CD4-positive, alpha-beta memory T cell (primary cell): ENCODE measurements at regions of chr6 and their contacts with region 1.

Region 1: GRCh38 chr6:41936073-41936837 is 5.4 kb downstream of the CCND3 start:
- DNase-seq: peak; percentile 79 to 91 (median 83)
- H3K4me3 ChIP-seq: peak overlapping the region; percentile 55 to 56
- H3K4me3 Mint-ChIP-seq: peak overlapping the region; percentile 71 to 99 (median 88)
- H3K27ac ChIP-seq: peak overlapping the region; percentile 58
- H3K27ac Mint-ChIP-seq: peak overlapping the region; percentile 86 to 96 (median 91)
- H3K4me1 ChIP-seq: peaks cover 72% of the 10 kb centered on the region
- H3K4me1 Mint-ChIP-seq: peaks cover 57 to 78% (median 69%) of the 10 kb centered on the region in 4 donors
- H3K27me3 ChIP-seq: no peaks in the 10 kb centered on the region
- H3K27me3 Mint-ChIP-seq: no peaks in the 10 kb centered on the region

Region 2: GRCh38 chr6:40743226-40743625 is 1193.0 kb before region 1 on chr6:
- CTCF ChIA-PET with region 1: no interaction called
- POLR2A ChIA-PET with region 1: no interaction called
- intact Hi-C with region 1: no loop called
- DNase-seq: no peak
- H3K4me3 ChIP-seq: no peak overlapping the region
- H3K4me3 Mint-ChIP-seq: no peak overlapping the region
- H3K27ac ChIP-seq: no peak overlapping the region
- H3K27ac Mint-ChIP-seq: no peak overlapping the region
- H3K4me1 ChIP-seq: no peaks in the 10 kb centered on the region
- H3K4me1 Mint-ChIP-seq: no peaks in the 10 kb centered on the region
- H3K27me3 ChIP-seq: no peaks in the 10 kb centered on the region
- H3K27me3 Mint-ChIP-seq: peaks cover 7 to 19% of the 10 kb centered on the region in 2 donors

Region 3: GRCh38 chr6:41560431-41561192 is 375.6 kb before region 1 on chr6:
- CTCF ChIA-PET with region 1: no interaction called
- POLR2A ChIA-PET with region 1: no interaction called
- intact Hi-C with region 1: no loop called
- DNase-seq: peak; percentile 92 to 98 (median 93)
- H3K4me3 ChIP-seq: peak overlapping the region; percentile 59 to 87
- H3K4me3 Mint-ChIP-seq: peak overlapping the region; percentile 84 to 92 (median 87)
- H3K27ac ChIP-seq: peak overlapping the region; percentile 70
- H3K27ac Mint-ChIP-seq: peak overlapping the region; percentile 83 to 98 (median 94)
- H3K4me1 ChIP-seq: peaks cover 25% of the 10 kb centered on the region
- H3K4me1 Mint-ChIP-seq: peaks cover 16 to 42% (median 29%) of the 10 kb centered on the region in 4 donors
- H3K27me3 ChIP-seq: no peaks in the 10 kb centered on the region
- H3K27me3 Mint-ChIP-seq: no peaks in the 10 kb centered on the region

Region 4: DNA sequence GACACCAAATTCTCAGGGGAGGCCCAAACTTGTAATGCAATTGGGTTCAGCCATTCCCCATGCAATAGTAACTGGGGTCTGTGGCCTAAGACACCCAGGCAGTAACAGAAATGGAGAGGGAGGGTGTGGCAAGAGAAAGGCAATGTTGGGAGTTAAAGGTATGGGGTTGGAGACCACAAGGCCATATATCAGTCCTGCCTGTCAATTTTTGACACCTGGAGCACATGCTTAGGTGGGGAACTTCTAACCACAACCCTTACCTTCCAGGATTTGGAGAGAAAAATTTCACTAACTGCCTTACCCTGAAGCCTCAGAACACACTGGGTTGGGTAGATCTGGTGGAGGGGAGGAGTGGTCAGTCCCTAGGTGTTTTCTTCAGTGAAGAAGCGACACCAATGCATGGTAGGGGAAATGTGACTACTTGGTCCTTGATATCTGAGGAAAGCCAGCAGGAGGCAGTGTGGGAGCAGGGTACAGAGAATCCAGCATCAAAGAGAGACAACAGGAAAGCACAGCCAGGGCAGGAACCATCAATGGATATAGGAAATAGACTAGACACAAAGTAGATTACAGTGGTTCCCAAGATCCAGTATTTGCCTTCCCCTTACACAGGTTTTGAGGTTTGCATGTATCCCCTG is 34.3 kb before region 1 on chr6:
- CTCF ChIA-PET with region 1: interaction called, 5 read pairs
- POLR2A ChIA-PET with region 1: interaction called, 3 read pairs
- intact Hi-C with region 1: loop called (anchors 5 kb)
- DNase-seq: peak; percentile 54 to 61 (median 60)
- H3K4me3 ChIP-seq: no peak overlapping the region
- H3K4me3 Mint-ChIP-seq: no peak overlapping the region
- H3K27ac ChIP-seq: no peak overlapping the region
- H3K27ac Mint-ChIP-seq: peak overlapping the region in 3 of 7 donors; percentile 1 to 35 (median 4)
- H3K4me1 ChIP-seq: peaks cover 6% of the 10 kb centered on the region
- H3K4me1 Mint-ChIP-seq: peaks cover 7 to 13% (median 10%) of the 10 kb centered on the region in 4 donors
- H3K27me3 ChIP-seq: no peaks in the 10 kb centered on the region
- H3K27me3 Mint-ChIP-seq: no peaks in the 10 kb centered on the region

Region 5: GRCh38 chr6:41976794-41977484 is 40.7 kb after region 1 on chr6:
- CTCF ChIA-PET with region 1: no interaction called
- POLR2A ChIA-PET with region 1: no interaction called
- intact Hi-C with region 1: loop called (anchors 5 kb)
- DNase-seq: no peak
- H3K4me3 ChIP-seq: no peak overlapping the region
- H3K4me3 Mint-ChIP-seq: peak overlapping the region in 4 of 8 donors; percentile 21 to 48 (median 40)
- H3K27ac ChIP-seq: no peak overlapping the region
- H3K27ac Mint-ChIP-seq: peak overlapping the region; percentile 47 to 79 (median 72)
- H3K4me1 ChIP-seq: peaks cover 79% of the 10 kb centered on the region
- H3K4me1 Mint-ChIP-seq: peaks cover 38 to 80% (median 60%) of the 10 kb centered on the region in 4 donors
- H3K27me3 ChIP-seq: no peaks in the 10 kb centered on the region
- H3K27me3 Mint-ChIP-seq: no peaks in the 10 kb centered on the region

Region 6: DNA sequence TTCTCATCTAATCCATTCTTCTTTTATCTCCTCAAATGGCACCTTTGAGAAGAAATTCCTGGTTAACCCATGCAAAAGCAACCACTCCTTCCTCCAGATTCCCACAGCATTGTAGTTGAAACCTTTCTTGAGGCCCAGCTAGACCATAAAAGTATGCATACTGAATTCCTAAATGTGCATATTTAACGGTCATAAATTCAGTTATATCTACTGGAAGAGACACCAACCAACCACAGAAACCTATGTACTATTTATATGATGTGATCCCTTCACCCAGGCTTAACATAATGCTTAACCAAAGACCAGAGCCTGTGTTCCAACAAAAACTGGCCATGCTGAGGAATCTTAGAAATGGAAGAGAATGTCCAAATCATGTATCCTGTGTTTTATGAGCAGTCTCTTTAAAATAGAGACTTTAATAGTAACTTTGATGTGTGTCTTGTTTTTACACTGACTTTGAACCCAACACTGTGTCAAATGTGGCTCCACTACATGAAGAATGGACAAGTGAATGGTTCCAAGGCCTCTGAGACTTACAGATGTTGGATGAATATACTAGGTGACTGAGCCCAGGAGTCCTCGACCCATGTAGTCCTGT is 102.7 kb after region 1 on chr6:
- CTCF ChIA-PET with region 1: interaction called, 169 read pairs
- POLR2A ChIA-PET with region 1: interaction called, 280 read pairs
- intact Hi-C with region 1: loop called (anchors 1 kb)
- DNase-seq: no peak
- H3K4me3 ChIP-seq: peak overlapping the region; percentile 9 to 52
- H3K4me3 Mint-ChIP-seq: peak overlapping the region; percentile 74 to 90 (median 87)
- H3K27ac ChIP-seq: peak overlapping the region; percentile 48
- H3K27ac Mint-ChIP-seq: peak overlapping the region; percentile 81 to 98 (median 91)
- H3K4me1 ChIP-seq: peaks cover 92% of the 10 kb centered on the region
- H3K4me1 Mint-ChIP-seq: peaks cover 39 to 81% (median 64%) of the 10 kb centered on the region in 4 donors
- H3K27me3 ChIP-seq: no peaks in the 10 kb centered on the region
- H3K27me3 Mint-ChIP-seq: no peaks in the 10 kb centered on the region